Activated naive CD4-positive, alpha-beta T cell treated with anti-CD3 and anti-CD28 coated beads for 36 hours (primary cell): ENCODE measurements at regions of chr12 and their contacts with region 1.

Region 1: DNA sequence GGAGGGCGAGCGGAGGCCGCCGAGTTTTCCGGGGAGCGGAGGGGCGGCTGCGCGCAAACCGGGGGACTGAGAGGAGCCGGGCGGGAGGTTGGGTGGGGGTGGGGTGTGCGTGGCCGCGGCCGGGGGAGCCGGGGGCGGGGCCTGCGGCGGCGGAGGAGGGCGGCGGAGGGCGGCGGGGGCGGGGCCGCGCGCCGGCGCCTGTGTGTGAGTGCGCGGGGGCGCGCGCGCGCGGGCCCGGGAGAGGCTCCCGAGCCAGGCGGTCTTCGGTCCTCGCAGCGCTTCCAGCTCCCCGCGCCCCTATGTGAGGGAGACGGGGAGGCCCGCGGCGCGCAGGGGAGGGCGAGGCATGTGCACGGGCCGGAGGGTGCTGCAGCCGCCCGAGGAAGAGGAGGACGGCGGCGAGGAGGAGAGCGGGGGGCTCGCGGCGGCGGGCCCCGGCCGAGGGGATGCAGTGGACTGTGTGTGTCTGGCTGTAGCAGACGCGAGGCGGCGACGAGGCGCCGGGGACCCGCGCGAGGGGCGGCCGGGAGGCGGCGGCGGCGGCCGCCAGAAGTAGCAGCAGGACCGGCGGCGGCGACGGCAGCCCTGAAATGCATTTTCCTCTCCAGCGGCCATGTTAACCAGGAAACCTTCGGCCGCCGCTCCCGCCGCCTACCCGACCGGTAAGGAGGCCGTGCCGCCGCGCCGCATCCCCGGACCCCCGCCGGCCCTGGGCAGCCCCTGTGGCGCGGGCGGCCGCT is at the start of gene DYRK2:
- DNase-seq: peak; percentile 65
- H3K4me3 Mint-ChIP-seq: peak within 1 kb of the TSS; percentile 98
- H3K27ac Mint-ChIP-seq: peak within 1 kb of the TSS; percentile 81
- H3K4me1 Mint-ChIP-seq: peaks cover 41% of the 10 kb centered on the region
- H3K27me3 Mint-ChIP-seq: no peaks in the 10 kb centered on the region
- total RNA-seq, gene DYRK2: 29.3 to 30.0 TPM

Region 2: DNA sequence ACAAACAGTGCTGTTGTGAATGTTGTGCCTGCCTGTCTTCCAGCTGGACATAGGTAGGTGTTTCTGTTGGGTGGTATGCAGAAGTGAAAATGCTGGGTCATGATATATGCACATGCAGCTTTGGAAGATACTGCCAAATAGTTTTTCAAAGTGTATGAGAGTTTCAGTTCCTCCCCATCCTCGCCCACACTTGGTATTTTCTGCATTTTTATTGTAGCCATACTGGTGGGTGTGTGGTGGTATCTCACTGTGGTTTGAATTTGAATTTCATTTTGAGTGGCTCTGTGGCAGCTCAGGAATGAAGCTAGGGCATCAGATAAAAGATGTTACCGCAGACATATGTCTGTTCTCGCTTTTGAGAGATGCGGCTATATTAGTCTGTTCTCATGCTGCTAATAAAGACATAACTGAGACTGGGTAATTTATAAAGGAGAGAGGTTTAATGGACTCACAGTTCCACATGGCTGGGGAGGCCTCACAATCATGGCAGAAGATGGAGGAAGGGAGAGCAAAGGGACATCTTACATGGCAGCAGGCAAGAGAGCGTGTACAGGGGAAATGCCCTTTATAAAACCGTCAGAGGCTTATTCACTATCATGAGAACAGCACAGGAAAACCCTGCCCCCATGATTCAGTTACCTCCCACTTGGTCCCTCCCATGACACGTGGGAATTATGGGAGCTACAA is 196.4 kb before region 1 on chr12:
- CTCF ChIA-PET with region 1: interaction called, 3 read pairs
- intact Hi-C with region 1: loop called (anchors 2 kb)
- DNase-seq: no peak
- H3K4me3 Mint-ChIP-seq: no peak overlapping the region
- H3K27ac Mint-ChIP-seq: no peak overlapping the region
- H3K4me1 Mint-ChIP-seq: peaks cover 47% of the 10 kb centered on the region
- H3K27me3 Mint-ChIP-seq: peaks cover 2% of the 10 kb centered on the region

Region 3: GRCh38 chr12:67592216-67593011 is 56.3 kb before region 1 on chr12:
- CTCF ChIA-PET with region 1: interaction called, 6 read pairs
- intact Hi-C with region 1: loop called (anchors 2 kb)
- DNase-seq: peak; percentile 32
- H3K4me3 Mint-ChIP-seq: no peak overlapping the region
- H3K27ac Mint-ChIP-seq: peak overlapping the region; percentile 22
- H3K4me1 Mint-ChIP-seq: peaks cover 49% of the 10 kb centered on the region
- H3K27me3 Mint-ChIP-seq: no peaks in the 10 kb centered on the region

Region 4: DNA sequence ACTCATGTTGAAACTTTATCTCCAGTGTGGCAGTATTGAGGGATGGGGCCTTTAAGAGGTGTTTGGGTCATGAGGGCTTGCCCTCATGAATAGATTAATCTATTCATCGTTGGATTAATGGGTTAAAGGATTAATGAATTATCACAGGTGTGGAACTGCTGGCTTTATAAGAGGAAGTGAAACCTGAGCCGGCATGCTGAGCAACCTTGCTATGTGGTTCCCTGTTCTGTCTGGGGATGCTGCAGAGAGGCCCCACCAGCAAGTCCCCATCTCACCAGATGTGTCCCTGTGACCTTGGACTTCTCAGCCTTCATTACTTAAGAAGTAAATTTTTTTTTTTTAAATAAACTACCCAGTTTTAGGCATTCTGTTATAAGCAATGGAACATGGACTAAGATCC is 109.4 kb after region 1 on chr12:
- CTCF ChIA-PET with region 1: no interaction called
- intact Hi-C with region 1: loop called (anchors 1 kb)
- DNase-seq: peak; percentile 9
- H3K4me3 Mint-ChIP-seq: no peak overlapping the region
- H3K27ac Mint-ChIP-seq: no peak overlapping the region
- H3K4me1 Mint-ChIP-seq: peaks cover 49% of the 10 kb centered on the region
- H3K27me3 Mint-ChIP-seq: no peaks in the 10 kb centered on the region

Region 5: GRCh38 chr12:67991158-67991557 is 342.5 kb after region 1 on chr12:
- CTCF ChIA-PET with region 1: no interaction called
- intact Hi-C with region 1: loop called (anchors 5 kb)
- DNase-seq: peak; percentile 74
- H3K4me3 Mint-ChIP-seq: peak overlapping the region; percentile 55
- H3K27ac Mint-ChIP-seq: peak overlapping the region; percentile 80
- H3K4me1 Mint-ChIP-seq: peaks cover 49% of the 10 kb centered on the region
- H3K27me3 Mint-ChIP-seq: peaks cover 2% of the 10 kb centered on the region